Activated CD8-positive, alpha-beta memory T cell treated with anti-CD3 and anti-CD28 coated beads, Interleukin-2, amount 10 ng/mL, durations not matched to agents 7 days and 5 days (primary cell): ENCODE measurements at regions of chr7 and their contacts with region 1.

Region 1: GRCh38 chr7:32479574-32480200 is 10.5 kb downstream of the LSM5 start:
- DNase-seq: no peak
- ATAC-seq: peak; percentile 39
- H3K4me3 Mint-ChIP-seq: no peak overlapping the region
- H3K27ac Mint-ChIP-seq: no peak overlapping the region
- H3K4me1 Mint-ChIP-seq: peaks cover 6% of the 10 kb centered on the region
- H3K27me3 Mint-ChIP-seq: peaks cover 2% of the 10 kb centered on the region

Region 2: GRCh38 chr7:32204361-32205018 is 275.2 kb before region 1 on chr7:
- CTCF ChIA-PET with region 1: interaction called, 12 read pairs
- DNase-seq: no peak
- ATAC-seq: no peak
- H3K4me3 Mint-ChIP-seq: no peak overlapping the region
- H3K27ac Mint-ChIP-seq: no peak overlapping the region
- H3K4me1 Mint-ChIP-seq: no peaks in the 10 kb centered on the region
- H3K27me3 Mint-ChIP-seq: peaks cover 2% of the 10 kb centered on the region

Region 3: DNA sequence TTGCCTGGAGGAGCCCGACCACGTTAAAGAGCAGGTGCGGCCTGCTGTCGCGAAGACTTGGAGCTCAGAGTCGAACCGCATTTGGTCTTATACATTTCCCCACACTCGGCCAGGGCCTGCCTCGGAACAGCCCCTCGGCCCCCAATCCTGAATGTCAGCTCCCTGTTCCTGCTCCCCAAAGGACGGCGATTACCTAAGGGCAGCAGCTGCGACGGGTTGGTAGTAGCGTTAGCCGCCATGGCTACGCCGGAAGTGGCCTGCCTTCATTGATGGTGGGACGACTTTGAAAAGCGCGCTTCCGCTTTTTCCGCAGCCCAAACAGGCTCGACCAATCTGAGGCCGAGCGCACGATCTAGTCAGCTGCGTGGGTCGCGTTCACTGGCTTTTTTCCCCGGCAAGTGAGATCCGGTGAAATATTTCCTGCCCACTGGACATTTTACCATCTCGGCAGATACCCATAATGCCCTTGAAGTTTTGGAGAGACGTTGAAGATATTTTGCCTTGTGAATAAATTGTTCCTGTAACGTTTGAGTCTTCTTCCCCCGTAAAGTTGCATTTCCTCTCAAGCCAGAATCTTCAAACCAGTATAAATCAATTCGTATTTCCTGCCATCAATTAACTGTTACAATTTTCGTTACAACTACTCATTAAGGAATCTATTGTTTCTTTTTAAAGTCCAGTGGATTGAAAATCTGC is 10.6 kb after region 1 on chr7 and contains the start of gene LSM5:
- CTCF ChIA-PET with region 1: interaction called, 12 read pairs
- DNase-seq: peak; percentile 94
- ATAC-seq: peak; percentile 84
- H3K4me3 Mint-ChIP-seq: peak within 1 kb of the TSS; percentile 82
- H3K27ac Mint-ChIP-seq: peak within 1 kb of the TSS; percentile 93
- H3K4me1 Mint-ChIP-seq: peaks cover 36% of the 10 kb centered on the region
- H3K27me3 Mint-ChIP-seq: no peaks in the 10 kb centered on the region
- total RNA-seq, gene LSM5: 72.0 to 88.6 TPM